RWPE1 (cell line): ENCODE measurements at regions of chr7 and their contacts with region 1.

Region 1: DNA sequence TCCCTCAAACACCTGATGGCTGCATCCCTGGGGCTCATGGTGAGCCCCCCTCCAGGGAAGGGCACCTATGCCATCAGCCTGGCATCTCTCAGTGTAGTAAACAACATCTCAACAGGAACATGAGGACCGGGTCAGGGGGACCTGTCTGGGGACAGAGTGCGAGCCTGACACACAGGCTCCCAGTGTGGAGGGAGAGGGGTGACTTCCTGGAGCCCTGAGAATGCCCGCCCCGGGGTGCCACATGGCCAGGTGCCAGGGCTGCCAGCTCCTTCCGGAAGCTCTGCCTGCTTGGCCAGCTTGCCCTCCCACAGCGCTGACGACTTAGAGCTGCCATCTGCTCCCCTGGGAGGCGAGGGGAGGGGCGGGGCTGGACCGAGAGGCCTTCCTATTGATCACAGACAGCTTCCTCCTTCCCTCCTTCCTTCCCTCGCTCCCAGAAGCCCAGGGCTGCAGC is 12.3 kb downstream of the STX1A start:
- DNase-seq: no peak
- H3K27ac ChIP-seq: peak overlapping the region; percentile 90
- CTCF ChIP-seq: no peak

Region 2: DNA sequence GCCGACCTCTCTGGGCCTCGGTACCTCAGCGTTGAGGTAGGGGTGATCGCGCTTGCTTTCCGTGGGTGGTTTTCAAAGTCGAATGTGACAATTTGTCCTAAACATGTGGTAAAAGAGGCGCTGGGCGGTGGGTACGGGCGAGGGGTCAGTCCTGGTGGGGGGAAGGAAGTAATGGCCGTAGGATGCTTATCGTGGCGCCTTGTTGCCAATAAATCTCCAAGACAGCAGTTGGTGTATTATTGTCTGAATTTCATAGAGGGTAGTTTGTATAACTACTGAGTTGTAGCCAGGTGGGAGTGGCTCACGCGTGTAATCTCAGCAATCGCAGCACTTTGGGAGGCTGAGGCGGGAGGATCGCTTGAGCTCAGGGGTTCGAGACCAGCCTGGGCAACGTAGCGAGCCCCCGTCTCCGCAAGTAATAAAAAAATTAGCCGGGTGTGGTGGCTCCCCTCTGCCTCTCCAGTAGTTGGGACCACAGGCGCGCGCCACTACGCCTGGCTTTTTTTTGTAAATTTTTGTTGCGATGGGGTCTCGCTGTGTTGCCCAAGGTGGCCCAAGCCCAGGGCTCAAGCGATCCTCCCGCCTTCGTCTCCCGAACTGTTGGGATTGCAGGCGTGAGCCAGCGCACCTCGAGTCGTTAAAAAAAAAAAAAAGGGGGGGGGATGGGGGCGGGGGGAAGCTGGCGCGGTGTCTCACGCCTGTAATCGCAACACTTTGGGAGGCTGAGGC is 23.0 kb before region 1 on chr7:
- CTCF ChIA-PET with region 1: no interaction called
- POLR2A ChIA-PET with region 1: interaction called, 11 read pairs
- DNase-seq: no peak
- H3K27ac ChIP-seq: peak overlapping the region; percentile 75
- CTCF ChIP-seq: no peak

Region 3: GRCh38 chr7:73742693-73743595 is 35.8 kb after region 1 on chr7:
- CTCF ChIA-PET with region 1: no interaction called
- POLR2A ChIA-PET with region 1: no interaction called
- DNase-seq: no peak
- H3K27ac ChIP-seq: peak overlapping the region; percentile 27
- CTCF ChIP-seq: no peak

Region 4: DNA sequence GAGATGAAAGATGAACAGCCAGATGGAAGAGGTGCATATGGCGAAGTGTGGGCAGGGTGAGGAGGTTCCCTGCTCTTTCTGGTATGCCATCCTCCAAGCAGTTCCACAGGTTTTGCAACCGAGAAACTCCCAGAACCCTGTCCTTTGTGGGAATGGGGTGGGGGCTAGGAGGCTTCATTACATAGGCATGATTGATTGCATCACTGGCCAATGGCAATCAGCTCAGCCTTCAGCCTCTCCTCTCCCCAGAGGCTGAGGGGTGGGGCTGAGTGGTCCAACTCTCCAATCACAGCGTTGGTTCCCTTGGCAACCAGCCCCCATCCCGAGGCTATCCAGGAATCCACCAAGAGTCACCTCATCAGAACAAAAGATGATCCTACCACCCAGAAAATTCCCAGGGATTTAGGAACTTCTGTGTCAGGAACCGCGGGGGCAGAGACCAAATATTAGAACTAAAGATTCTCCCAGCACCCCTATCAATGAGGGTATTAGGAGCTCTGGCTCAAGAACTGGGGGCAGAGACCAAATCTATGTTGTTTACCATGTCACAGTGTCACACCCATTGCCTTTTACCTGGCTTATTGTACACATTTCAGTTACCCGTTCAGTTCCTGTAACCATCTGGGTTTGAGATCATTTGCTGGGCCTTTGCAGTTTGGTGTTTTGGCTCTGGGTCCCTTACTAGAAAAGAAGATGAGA is 85.6 kb after region 1 on chr7:
- CTCF ChIA-PET with region 1: no interaction called
- POLR2A ChIA-PET with region 1: no interaction called
- DNase-seq: peak; percentile 55
- H3K27ac ChIP-seq: no peak overlapping the region
- CTCF ChIP-seq: no peak